ENCODE measurements at regions of chr15 and their contacts with region 1.

Region 1: DNA sequence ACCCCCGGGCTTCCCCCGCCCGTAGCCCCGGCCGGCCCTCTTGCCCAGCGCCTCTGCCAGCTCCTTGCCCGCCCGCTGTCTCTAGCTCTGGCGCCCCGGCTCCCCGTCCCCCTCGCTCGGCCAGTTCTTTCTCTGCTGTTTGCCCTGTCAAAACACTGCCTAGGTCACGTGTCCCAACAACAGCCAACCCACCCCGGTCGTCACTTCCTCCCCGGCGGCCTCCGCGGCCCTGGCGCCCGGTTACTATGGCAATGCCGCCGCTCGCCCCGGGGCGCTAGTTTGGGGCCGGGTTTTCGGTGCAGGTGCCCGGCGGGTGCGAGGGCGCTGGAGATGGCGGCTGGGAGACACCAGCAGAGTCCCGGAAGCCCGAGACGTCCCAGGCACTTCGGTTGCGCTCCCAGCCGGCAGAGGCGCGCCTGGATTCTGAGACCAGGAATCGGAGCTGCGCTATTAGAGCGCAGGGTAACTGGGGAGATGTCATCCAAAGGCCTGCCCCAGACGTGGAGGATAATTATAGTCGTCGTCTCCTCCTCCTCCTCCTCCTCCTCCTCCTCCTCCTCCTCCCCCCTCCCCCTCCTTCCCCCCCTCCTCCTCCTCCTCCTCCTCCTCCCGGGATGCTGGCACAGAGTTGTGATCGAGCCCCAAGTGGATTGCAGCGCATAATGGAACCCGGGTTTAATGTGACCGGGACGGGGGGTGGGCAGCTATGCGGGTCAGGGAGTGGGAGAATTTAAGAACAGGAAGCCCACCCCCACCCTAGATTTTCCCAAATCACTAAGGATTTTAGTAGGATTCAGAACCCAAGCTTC is at the start of gene ATOSA:
- DNase-seq: peak; percentile 94 to 95
- ATAC-seq: peak; percentile 77 to 85
- H3K4me3 ChIP-seq: peak within 1 kb of the TSS; percentile 92 to 98 (median 95)
- H3K27ac ChIP-seq: peak within 1 kb of the TSS; percentile 98 to 100 (median 99)
- H3K4me1 ChIP-seq: peaks cover 26 to 41% of the 10 kb centered on the region in 2 donors
- H3K27me3 ChIP-seq: no peaks in the 10 kb centered on the region
- CTCF ChIP-seq: peak in 4 of 5 experiments; percentile 10 to 20 (median 14)
- POLR2A ChIP-seq: peak; percentile 84 to 94
- total RNA-seq, gene ATOSA: 61.9 to 491 (median 137) TPM

Region 2: DNA sequence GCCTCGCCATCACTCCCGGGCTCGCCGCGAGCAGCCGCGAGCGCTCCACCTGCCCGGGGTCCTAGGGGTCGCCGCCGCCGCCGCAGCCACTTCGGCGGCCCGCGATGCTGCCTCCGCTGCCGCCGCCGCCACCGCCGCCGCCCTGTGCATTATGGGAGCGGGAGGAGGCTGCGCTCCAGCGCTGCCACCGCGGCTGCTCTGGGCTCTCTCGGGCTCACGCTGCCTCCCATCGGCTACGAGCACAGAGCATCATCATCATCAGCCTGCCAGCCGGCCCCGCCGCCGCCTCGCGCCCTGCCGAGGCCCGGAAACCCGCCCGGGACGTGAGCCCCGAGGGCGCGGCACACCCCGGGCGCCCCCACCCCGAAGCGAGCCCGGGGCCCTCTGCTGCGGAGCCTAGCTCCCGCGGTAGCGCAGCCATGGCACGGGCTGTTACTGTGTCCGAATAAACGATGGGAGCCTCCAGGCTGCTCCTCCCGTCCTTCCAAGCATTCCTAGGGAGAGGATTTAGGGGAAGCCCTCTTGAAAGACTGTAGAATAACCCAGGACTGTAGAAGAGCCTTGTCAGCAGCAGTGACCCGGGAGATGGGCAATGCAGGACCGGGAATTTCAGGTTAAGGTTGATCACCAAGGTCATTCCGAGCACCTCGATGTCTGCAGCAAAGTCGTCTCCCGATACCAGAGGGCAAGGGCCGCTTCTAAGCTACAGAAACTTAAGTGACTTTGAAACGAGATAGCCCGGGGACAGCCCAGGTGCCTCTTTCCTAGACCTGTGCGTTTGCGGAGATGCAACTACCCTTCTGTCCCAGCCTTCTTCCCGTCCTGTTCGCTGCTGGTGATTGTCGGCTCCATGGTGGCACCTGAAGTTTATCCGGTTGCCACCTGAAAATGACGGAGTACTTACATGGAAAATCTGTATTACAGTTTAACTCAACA is 150.2 kb before region 1 on chr15:
- in situ Hi-C with region 1: no loop called
- intact Hi-C with region 1: loop called (anchors 2 kb)
- DNase-seq: peak; percentile 61 to 66
- ATAC-seq: peak; percentile 81 to 86
- H3K4me3 ChIP-seq: peak overlapping the region; percentile 41 to 93 (median 62)
- H3K27ac ChIP-seq: peak overlapping the region; percentile 36 to 93 (median 85)
- H3K4me1 ChIP-seq: peaks cover 18 to 31% of the 10 kb centered on the region in 2 donors
- H3K27me3 ChIP-seq: no peaks in the 10 kb centered on the region
- CTCF ChIP-seq: peak in 1 of 5 experiments; percentile 1
- POLR2A ChIP-seq: peak in 1 of 2 donors; percentile 51

Region 3: GRCh38 chr15:52624262-52624661 is 55.2 kb before region 1 on chr15:
- in situ Hi-C with region 1: no loop called
- intact Hi-C with region 1: loop called (anchors 10 kb)
- DNase-seq: no peak
- ATAC-seq: no peak
- H3K4me3 ChIP-seq: no peak overlapping the region
- H3K27ac ChIP-seq: peak overlapping the region; percentile 52 to 80 (median 66)
- H3K4me1 ChIP-seq: peaks cover 33 to 77% of the 10 kb centered on the region in 2 donors
- H3K27me3 ChIP-seq: no peaks in the 10 kb centered on the region
- CTCF ChIP-seq: no peak
- POLR2A ChIP-seq: no peak

Region 4: DNA sequence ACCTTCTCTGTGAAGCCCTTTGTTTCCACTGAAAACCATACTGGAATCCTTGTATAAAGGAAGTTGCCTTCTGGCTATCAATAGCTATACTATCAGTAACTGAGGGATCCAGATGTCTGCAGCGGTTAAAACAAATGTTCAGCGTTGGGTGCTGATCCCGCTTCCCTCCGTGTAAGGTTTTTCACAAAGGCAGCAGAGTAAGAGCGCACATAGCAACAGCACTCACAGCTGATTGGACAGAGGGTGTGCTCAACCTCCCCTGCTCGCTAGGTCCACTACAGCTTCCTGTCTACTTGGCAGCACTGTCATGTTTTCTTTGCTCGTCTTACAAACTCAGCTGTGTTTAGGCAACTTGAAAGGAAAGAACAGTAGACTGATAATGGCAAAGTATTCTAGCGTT is 27.6 kb before region 1 on chr15:
- in situ Hi-C with region 1: no loop called
- intact Hi-C with region 1: loop called (anchors 2 kb)
- DNase-seq: peak; percentile 69
- ATAC-seq: peak; percentile 68 to 86
- H3K4me3 ChIP-seq: peak overlapping the region; percentile 6 to 34 (median 23)
- H3K27ac ChIP-seq: peak overlapping the region; percentile 79 to 89 (median 83)
- H3K4me1 ChIP-seq: peaks cover 85 to 98% of the 10 kb centered on the region in 2 donors
- H3K27me3 ChIP-seq: no peaks in the 10 kb centered on the region
- CTCF ChIP-seq: no peak
- POLR2A ChIP-seq: no peak